ENCODE measurements at regions of chrX and their contacts with region 1.

Region 1: DNA sequence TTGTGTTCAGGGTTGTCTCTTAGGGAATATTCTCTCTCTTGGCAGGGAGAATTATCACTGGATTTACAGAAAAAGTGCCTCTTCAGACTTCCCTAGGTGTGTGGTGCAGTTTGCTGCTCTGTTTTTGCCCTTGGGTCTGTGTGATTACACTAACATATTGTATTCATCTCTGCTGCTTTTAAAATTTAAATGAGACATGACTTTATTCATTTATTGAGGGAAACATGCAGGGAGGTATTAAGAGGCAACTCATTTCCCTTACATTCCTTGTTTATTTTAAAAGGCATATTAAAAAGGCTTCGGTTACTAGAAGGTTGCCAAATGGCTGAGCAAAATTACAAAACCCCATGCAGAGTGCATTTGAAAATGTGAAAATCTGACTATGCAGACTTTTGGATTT is 135.1 kb upstream of the GEMIN8 start:
- DNase-seq: no peak
- H3K4me3 Mint-ChIP-seq: no peak overlapping the region
- H3K27ac Mint-ChIP-seq: no peak overlapping the region
- H3K4me1 Mint-ChIP-seq: no peaks in the 10 kb centered on the region
- H3K27me3 Mint-ChIP-seq: peaks cover 14% of the 10 kb centered on the region
- CTCF ChIP-seq: no peak

Region 2: DNA sequence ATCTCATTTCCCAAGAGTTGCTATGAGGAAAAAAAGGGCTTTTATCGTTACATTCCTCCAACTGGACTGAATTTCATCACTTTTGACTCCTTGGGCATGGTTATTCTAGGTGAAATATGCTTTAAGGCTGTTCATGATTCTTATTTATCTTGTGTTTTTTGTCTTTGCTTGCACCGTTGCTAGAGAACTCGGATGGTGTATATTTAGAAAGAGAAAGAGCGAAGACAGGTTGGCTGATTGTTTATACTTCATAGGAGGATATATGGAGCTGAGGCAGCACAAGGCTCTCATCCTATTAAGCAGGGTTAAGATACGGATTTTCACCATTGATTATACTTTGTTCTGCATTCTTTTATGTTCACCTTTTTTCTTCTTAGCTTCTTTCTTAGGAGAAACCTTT is 40.3 kb before region 1 on chrX:
- CTCF ChIA-PET with region 1: no interaction called
- intact Hi-C with region 1: loop called (anchors 2 kb)
- DNase-seq: no peak
- H3K4me3 Mint-ChIP-seq: no peak overlapping the region
- H3K27ac Mint-ChIP-seq: no peak overlapping the region
- H3K4me1 Mint-ChIP-seq: no peaks in the 10 kb centered on the region
- H3K27me3 Mint-ChIP-seq: peaks cover 63% of the 10 kb centered on the region
- CTCF ChIP-seq: no peak